ENCODE measurements at regions of chr12 and their contacts with region 1.

Region 1: GRCh38 chr12:82554529-82554928 is 132.2 kb upstream of the TMTC2 start:
- DNase-seq: no peak
- ATAC-seq: no peak
- H3K4me3 ChIP-seq: no peak overlapping the region
- H3K27ac ChIP-seq: no peak overlapping the region
- H3K4me1 ChIP-seq: no peaks in the 10 kb centered on the region
- H3K27me3 ChIP-seq: no peaks in the 10 kb centered on the region
- CTCF ChIP-seq: no peak
- EP300 ChIP-seq: no peak
- POLR2A ChIP-seq: no peak
- RAD21 ChIP-seq: no peak

Region 2: DNA sequence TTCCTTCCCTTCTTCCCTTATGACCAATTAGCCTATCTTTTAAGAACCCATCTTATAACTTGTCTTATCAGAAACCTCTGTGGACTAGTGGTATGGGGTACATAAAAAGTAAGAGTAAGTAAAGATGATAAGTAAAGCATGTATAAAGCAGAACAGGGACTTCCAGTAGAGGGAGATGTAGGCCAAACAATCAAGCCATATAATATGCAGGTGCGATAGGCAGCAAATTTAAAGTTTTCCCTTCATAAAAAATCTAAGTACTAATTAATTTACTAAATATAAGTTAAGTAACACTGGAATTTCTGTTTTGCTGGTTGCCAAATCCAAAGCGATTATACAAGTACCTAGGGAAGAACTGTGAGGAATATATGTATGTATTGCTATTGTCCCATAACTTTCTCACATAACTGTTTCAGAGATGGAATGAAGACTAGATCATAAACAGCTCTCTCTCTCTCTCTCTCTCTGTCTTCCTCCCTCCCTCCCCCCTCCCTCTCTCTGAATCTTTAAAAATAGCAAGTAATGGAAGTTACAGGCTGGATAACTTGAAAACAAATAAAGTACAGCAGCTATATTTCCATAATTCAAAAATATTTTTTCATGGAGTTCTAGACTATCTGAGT is 170.5 kb before region 1 on chr12:
- CTCF ChIA-PET with region 1: no interaction called
- POLR2A ChIA-PET with region 1: no interaction called
- in situ Hi-C with region 1: no loop called
- intact Hi-C with region 1: loop called (anchors 5 kb)
- DNase-seq: no peak
- ATAC-seq: peak; percentile 69; the same call in 2 of the 3 replicates
- H3K4me3 ChIP-seq: no peak overlapping the region
- H3K27ac ChIP-seq: no peak overlapping the region
- H3K4me1 ChIP-seq: no peaks in the 10 kb centered on the region
- H3K27me3 ChIP-seq: no peaks in the 10 kb centered on the region
- CTCF ChIP-seq: peak; percentile 43
- EP300 ChIP-seq: no peak
- POLR2A ChIP-seq: no peak
- RAD21 ChIP-seq: no peak

Region 3: GRCh38 chr12:82583756-82584155 is 29.2 kb after region 1 on chr12:
- CTCF ChIA-PET with region 1: no interaction called
- POLR2A ChIA-PET with region 1: no interaction called
- in situ Hi-C with region 1: no loop called
- intact Hi-C with region 1: loop called (anchors 1 kb)
- DNase-seq: no peak
- ATAC-seq: no peak
- H3K4me3 ChIP-seq: no peak overlapping the region
- H3K27ac ChIP-seq: no peak overlapping the region
- H3K4me1 ChIP-seq: no peaks in the 10 kb centered on the region
- H3K27me3 ChIP-seq: no peaks in the 10 kb centered on the region
- CTCF ChIP-seq: no peak
- EP300 ChIP-seq: no peak
- POLR2A ChIP-seq: no peak
- RAD21 ChIP-seq: no peak

Region 4: DNA sequence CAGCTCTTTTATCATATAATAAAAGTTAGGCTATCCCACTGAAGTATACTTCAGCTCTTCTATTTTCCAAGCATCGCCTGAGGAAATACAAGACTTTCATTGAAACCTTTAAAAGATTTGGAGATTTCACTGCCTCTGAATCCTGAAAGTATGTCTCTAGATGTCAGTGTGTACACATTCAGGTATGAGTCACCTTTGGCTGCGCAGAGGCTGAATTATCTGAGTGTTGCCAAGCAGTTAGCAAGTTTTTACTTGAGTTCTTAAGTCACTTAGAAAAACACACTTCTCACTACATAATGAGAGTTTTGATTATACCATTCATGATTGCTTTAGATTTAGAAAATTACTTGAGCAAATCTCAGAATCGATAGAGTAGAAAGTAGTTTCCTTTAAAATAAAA is 342.4 kb after region 1 on chr12:
- CTCF ChIA-PET with region 1: no interaction called
- POLR2A ChIA-PET with region 1: no interaction called
- in situ Hi-C with region 1: no loop called
- intact Hi-C with region 1: no loop called
- DNase-seq: no peak
- ATAC-seq: no peak
- H3K4me3 ChIP-seq: no peak overlapping the region
- H3K27ac ChIP-seq: no peak overlapping the region
- H3K4me1 ChIP-seq: no peaks in the 10 kb centered on the region
- H3K27me3 ChIP-seq: no peaks in the 10 kb centered on the region
- CTCF ChIP-seq: no peak
- EP300 ChIP-seq: no peak
- POLR2A ChIP-seq: no peak
- RAD21 ChIP-seq: no peak

Measured in HepG2 (cell line).